ENCODE measurements at regions of chr12 and their contacts with region 1.

Region 1: DNA sequence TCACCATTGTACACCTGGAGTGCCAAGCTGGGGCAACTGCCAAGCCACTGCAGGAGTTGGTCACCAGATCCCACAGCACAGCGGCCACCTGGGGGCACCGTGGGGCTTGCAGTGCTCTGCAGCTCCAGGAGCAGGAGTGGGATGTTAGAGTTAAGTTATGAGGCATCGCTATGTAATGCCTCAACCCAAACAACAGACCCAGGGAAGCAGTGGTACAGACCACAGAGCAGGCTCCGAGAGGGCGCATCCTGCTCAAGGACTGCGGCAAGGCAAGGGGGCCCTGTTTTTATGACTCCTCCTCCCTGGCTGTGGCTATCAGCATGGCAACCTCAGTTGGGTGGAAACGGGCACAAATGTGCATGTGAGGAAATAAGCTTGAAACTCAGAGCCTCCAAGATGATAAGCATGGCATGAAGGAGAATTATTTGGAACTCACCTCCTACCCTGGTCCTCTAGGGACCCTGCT is 63.1 kb downstream of the ARL6IP4 start:
- DNase-seq: peak; percentile 80 to 91 (median 89)
- ATAC-seq: peak; percentile 87 to 94 (median 92)
- H3K4me3 ChIP-seq: no peak overlapping the region
- H3K27ac ChIP-seq: peak overlapping the region in 7 of 12 donors; percentile 3 to 75 (median 35)
- H3K4me1 ChIP-seq: peaks cover 2 to 59% (median 27%) of the 10 kb centered on the region in 12 donors
- H3K27me3 ChIP-seq: no peaks in the 10 kb centered on the region
- CTCF ChIP-seq: peak; percentile 49 to 86 (median 72)
- POLR2A ChIP-seq: no peak

Region 2: DNA sequence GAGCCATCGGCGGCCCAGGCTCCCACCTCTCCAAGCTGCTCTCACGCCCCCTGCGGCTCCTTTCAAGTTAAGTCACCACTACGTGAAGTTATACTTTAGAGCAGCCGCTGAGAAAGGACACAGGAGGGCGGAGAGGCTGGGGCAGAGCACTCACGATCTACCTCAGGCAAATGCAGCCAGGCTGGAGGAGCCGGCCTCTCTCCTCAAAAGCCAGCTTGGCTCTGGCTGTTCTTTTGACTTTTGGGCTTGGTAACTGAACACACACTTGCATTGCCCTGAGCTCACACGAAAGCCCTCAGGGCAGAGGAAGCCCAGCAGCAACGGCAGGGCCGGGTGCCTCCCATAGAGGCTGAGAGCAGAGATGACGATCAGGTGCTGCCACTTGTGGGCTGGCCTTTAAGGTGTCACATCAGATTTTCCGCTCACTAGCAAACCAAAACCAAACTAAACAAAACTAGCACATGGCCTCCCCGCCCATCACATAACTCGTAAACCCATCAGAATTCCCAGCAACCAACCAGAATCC is 32.1 kb after region 1 on chr12:
- intact Hi-C with region 1: loop called in 1 of 10 experiments (anchors 5 kb)
- DNase-seq: peak in 1 of 5 donors; percentile 60
- ATAC-seq: peak in 2 of 4 donors; percentile 8 to 30
- H3K4me3 ChIP-seq: peak overlapping the region in 3 of 12 donors; percentile 9 to 42 (median 11)
- H3K27ac ChIP-seq: peak overlapping the region in 11 of 12 donors; percentile 44 to 85 (median 64)
- H3K4me1 ChIP-seq: peaks cover 14 to 88% (median 65%) of the 10 kb centered on the region in 12 donors
- H3K27me3 ChIP-seq: no peaks in the 10 kb centered on the region
- CTCF ChIP-seq: peak in 5 of 12 donors; percentile 14 to 45 (median 21)
- POLR2A ChIP-seq: no peak

Region 3: GRCh38 chr12:123115409-123116121 is 72.0 kb after region 1 on chr12:
- intact Hi-C with region 1: loop called in 1 of 10 experiments (anchors 10 kb)
- DNase-seq: peak in 4 of 5 donors; percentile 69 to 75 (median 74)
- ATAC-seq: peak; percentile 89 to 92 (median 91)
- H3K4me3 ChIP-seq: peak overlapping the region in 2 of 12 donors; percentile 25 to 29
- H3K27ac ChIP-seq: peak overlapping the region; percentile 26 to 86 (median 76)
- H3K4me1 ChIP-seq: peaks cover 12 to 84% (median 49%) of the 10 kb centered on the region in 12 donors
- H3K27me3 ChIP-seq: no peaks in the 10 kb centered on the region
- CTCF ChIP-seq: peak in 1 of 12 donors; percentile 13
- POLR2A ChIP-seq: no peak

Region 4: DNA sequence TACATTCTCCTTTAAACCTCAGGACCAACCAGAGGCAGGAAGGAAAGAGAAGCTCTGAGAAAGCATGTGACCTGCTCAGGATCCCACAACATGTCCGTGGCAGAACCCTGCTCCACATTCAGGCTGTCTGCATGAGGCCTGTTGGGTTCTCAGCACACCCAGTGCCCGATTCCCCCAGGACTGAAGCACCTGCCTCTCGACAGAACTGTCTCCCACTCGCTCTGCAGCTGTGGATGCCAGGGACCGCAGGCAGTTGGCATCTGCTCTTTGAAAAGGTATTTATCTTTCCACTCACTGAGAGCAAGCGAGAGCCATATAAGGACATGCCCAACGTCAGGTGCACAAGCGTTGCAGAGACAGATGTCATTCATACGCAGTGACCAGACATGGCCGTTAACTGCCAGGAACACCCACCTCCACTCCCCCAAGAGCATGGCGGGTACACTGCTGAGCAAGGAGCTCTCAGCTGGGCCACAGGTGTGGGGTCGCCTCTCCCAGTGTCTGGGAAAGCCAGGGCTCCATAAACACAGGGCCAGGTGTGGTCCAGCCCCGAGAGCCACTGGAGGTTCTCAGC is 88.4 kb after region 1 on chr12:
- intact Hi-C with region 1: no loop called
- DNase-seq: peak in 2 of 5 donors; percentile 53 to 79
- ATAC-seq: peak; percentile 53 to 86 (median 82)
- H3K4me3 ChIP-seq: no peak overlapping the region
- H3K27ac ChIP-seq: peak overlapping the region in 11 of 12 donors; percentile 36 to 84 (median 69)
- H3K4me1 ChIP-seq: peaks cover 0 to 27% (median 14%) of the 10 kb centered on the region in 12 donors
- H3K27me3 ChIP-seq: no peaks in the 10 kb centered on the region
- CTCF ChIP-seq: no peak
- POLR2A ChIP-seq: no peak

Measured in heart left ventricle (tissue), 16 donors.